Activated B cell treated with CpG ODN at 0.5 μM for 24 hours (primary cell): ENCODE measurements at regions of chr3 and their contacts with region 1.

Region 1: GRCh38 chr3:49158108-49158709 is 7.9 kb downstream of the CCDC71 start:
- DNase-seq: peak; percentile 26
- ATAC-seq: peak; percentile 84
- H3K4me3 Mint-ChIP-seq: no peak overlapping the region
- H3K27ac Mint-ChIP-seq: no peak overlapping the region
- H3K4me1 Mint-ChIP-seq: peaks cover 2% of the 10 kb centered on the region
- H3K27me3 Mint-ChIP-seq: no peaks in the 10 kb centered on the region
- CTCF ChIP-seq: no peak

Region 2: DNA sequence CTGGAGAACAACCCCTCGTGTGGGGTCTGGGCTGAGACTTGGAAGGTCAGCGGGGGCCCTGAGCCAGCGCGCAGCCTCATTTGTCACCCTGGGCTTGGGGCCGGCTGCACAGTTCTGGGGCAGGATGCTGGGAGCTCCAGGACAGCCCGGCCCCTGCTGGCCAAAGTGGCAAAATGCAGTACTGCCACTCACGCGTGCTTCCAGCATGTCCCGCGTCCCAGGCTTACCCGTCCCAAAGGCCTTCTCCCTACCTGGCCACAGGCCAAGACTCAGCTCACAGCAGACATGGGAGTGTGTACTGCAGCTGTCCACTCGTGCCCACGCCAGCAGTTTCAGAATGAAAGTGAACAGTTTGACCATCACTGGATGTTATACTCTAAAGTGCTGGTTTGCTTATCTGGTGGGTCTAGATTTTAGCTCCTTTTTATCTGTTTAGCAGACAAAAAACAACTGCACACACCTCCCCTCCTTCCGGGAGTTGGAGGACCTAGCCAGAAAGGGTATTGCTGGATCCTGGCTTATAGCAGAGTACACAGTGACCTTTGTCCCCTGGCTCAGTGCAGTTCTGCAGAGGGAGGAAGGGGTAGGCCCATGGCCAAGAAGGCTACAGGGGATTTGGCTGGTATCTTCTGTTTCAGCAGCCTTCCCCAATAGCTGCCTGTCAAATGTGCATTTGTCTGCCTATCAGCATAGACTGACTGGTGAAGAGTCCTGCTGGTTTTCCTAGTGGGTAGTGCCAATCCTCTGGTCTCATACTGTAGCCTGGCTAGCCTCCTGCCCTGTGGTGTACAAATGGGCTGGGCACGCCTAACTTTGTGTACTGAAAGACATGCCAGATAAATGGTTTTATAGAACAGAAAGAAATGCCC is 418.0 kb before region 1 on chr3:
- CTCF ChIA-PET with region 1: no interaction called
- POLR2A ChIA-PET with region 1: no interaction called
- intact Hi-C with region 1: loop called (anchors 10 kb)
- DNase-seq: peak; percentile 42
- ATAC-seq: peak; percentile 97
- H3K4me3 Mint-ChIP-seq: no peak overlapping the region
- H3K27ac Mint-ChIP-seq: no peak overlapping the region
- H3K4me1 Mint-ChIP-seq: peaks cover 10% of the 10 kb centered on the region
- H3K27me3 Mint-ChIP-seq: no peaks in the 10 kb centered on the region
- CTCF ChIP-seq: no peak

Region 3: GRCh38 chr3:48989796-48990635 is 168.2 kb before region 1 on chr3 and contains the start of gene P4HTM:
- CTCF ChIA-PET with region 1: interaction called, 46 read pairs
- POLR2A ChIA-PET with region 1: no interaction called
- intact Hi-C with region 1: no loop called
- DNase-seq: peak; percentile 58
- ATAC-seq: peak; percentile 64
- H3K4me3 Mint-ChIP-seq: peak within 1 kb of the TSS; percentile 92
- H3K27ac Mint-ChIP-seq: peak within 1 kb of the TSS; percentile 83
- H3K4me1 Mint-ChIP-seq: peaks cover 28% of the 10 kb centered on the region
- H3K27me3 Mint-ChIP-seq: no peaks in the 10 kb centered on the region
- CTCF ChIP-seq: no peak
- total RNA-seq, gene P4HTM: 26.0 and 34.4 TPM in 2 replicates

Region 4: DNA sequence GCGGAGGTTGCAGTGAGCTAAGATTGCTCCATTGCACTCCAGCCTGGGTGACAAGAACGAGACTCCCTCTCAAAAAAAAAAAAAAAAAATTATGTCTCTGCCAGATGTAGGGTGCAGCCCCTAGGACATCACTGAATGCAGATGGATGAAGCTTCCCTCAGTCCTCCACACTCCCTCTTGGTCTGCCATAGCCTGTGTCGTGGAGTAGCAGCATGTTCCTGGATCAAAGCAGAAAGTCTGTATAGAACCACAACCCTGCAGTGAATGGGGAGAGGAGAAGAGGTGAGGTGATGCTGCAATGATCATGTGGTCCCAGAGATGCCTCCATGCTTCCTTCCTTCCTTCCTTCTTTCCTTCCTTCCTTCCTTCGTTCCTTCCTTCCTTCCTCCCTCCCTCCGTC is 10.1 kb before region 1 on chr3:
- CTCF ChIA-PET with region 1: no interaction called
- POLR2A ChIA-PET with region 1: interaction called, 11 read pairs
- intact Hi-C with region 1: no loop called
- DNase-seq: no peak
- ATAC-seq: no peak
- H3K4me3 Mint-ChIP-seq: no peak overlapping the region
- H3K27ac Mint-ChIP-seq: no peak overlapping the region
- H3K4me1 Mint-ChIP-seq: no peaks in the 10 kb centered on the region
- H3K27me3 Mint-ChIP-seq: peaks cover 3% of the 10 kb centered on the region
- CTCF ChIP-seq: no peak

Region 5: DNA sequence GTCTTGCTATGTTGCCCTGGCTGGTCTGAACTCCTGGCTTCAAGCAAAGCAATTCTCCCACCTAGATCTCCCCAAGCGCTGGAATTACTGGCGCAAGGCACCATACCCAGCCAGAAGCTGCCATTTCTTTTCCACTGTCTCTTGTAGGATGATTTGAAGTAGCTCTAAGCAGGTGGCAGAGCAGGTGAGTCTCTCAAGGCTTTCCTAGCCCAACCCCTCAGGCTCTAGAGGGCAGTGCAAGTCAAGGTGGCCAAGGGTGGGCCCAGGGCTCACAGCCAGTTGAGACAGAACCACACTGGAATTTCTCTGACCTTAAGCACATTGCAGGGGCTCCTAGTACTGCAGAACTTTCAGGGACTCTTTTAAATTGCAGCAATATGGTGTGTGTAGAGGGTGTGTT is 296.2 kb after region 1 on chr3:
- CTCF ChIA-PET with region 1: no interaction called
- POLR2A ChIA-PET with region 1: no interaction called
- intact Hi-C with region 1: no loop called
- DNase-seq: no peak
- ATAC-seq: no peak
- H3K4me3 Mint-ChIP-seq: no peak overlapping the region
- H3K27ac Mint-ChIP-seq: no peak overlapping the region
- H3K4me1 Mint-ChIP-seq: no peaks in the 10 kb centered on the region
- H3K27me3 Mint-ChIP-seq: no peaks in the 10 kb centered on the region
- CTCF ChIP-seq: no peak